Calu3 (cell line): ENCODE measurements at regions of chr7 and their contacts with region 1.

Region 1: DNA sequence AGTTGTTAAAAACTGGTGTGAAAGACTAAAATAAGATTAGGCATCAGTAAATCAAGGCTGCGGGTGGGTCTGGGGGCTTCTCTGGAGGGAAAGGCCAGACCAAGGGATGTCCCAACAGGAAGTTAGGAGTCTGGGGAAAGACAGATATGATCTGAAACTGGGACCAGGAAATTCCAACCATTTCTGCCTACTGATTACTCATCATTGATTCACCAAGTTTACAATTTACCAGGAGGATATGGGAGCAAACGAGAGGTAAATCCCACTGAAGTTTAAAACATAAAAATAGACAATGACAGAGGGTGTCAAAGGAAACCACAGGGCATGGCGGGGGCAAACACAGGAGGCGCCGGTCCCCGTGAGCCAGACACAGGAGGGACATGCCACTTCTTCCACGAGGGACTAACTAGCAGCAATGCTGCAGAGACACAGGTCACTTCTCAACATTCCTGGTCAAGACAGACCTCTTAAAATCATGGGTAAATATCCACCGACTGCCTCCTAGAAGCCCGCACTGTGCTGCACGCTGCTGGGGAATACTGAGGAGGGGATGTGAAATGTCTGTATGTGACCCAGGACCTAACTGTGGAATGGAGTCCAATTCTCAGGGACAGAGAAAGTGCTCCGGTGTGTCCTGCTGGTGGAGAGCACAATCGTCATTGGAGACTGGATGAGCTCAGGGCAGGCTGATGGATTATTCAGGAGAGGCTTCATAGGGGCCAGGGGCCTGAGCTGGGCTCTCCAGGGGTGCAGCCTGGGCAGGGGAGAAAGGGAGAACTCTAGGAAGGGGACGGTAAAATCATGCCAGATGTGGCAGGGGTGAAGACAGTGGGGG is 153.4 kb upstream of the KLF14 start:
- DNase-seq: no peak
- H3K4me3 Mint-ChIP-seq: peak overlapping the region; percentile 60
- H3K27ac Mint-ChIP-seq: peak overlapping the region; percentile 78
- H3K4me1 Mint-ChIP-seq: peaks cover 73% of the 10 kb centered on the region
- H3K27me3 Mint-ChIP-seq: no peaks in the 10 kb centered on the region
- CTCF ChIP-seq: no peak

Region 2: DNA sequence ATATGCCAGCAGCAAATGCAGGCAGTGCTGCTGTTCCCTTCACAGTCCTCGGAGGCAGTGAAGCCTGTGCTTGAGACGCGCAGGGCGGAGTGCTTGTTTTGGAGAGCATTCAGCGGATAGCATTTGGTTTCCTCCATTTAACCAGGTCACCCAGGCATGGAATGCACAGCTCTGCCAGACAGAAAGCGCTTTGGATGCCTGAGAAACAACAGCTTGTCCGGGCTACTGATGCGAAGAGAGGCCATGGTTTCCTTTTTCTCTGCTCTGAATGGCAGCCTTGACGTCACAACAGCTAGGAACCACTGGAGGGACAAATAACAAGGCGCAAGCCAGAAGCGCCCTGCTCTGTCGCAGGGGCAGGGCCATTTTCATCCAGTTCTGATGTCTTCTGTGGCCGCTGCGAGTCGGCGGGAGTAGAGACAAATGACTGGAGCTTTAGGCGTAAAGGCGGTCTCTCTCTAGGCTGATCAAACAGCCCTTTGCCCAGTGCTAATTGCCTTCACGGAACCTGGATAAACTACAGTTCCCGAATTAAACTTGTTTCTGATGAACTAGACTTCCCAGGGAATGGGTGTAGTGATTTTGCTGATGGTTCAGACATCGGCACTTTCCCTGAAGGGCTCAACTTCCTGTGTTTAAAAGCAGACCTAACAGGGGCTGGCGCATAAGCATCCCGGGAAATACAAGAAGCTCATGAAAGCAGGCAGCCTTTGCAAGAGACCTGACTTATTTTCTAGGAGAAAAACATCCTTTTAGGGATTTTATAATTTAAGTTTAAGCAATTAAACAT is 34.2 kb after region 1 on chr7:
- CTCF ChIA-PET with region 1: interaction called, 4 read pairs
- intact Hi-C with region 1: loop called (anchors 5 kb)
- DNase-seq: no peak
- H3K4me3 Mint-ChIP-seq: peak overlapping the region; percentile 56
- H3K27ac Mint-ChIP-seq: peak overlapping the region; percentile 85
- H3K4me1 Mint-ChIP-seq: peaks cover 79% of the 10 kb centered on the region
- H3K27me3 Mint-ChIP-seq: no peaks in the 10 kb centered on the region
- CTCF ChIP-seq: no peak

Region 3: DNA sequence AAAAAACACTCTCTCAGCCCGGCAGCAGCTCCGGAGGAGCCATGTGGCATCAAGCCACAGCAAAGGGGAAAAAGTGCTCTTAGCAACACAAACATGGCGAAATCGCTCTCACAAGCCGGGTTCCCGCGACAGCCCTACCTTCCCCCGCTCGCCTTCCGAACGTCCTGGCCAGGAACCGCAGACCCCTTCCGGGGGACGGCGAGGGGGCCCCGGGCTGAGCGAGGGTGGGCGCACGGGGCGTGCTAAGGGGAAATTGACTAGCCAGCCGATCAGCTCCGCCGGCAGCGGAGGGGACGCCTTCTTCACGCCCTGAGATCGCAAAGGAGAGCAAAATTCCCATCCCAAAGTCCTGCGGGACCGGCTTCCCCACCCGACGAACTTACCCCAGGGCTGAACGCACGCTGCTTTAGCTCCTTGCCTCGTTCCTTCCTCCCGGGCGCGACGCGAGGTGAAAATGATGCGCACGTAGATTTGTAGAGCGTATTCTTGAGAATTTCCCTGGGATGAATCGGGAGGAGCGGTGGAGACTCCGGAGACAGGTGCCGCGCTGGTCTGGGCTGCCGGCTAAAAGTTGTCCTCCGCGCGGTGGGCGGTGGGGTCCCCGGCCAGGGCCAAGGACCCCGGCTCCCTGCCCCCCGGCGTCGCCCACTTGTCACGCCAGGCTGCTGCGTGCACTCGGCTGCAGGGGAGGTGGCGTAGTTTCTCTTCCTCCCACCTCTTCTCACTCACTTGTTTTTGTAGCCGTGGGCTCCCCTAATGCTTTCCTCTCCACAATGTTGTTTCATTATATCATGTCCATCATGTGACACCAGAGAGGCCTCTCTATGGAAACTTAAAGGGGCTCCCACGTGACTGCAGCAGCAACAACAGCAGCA is 220.2 kb after region 1 on chr7:
- CTCF ChIA-PET with region 1: no interaction called
- intact Hi-C with region 1: no loop called
- DNase-seq: peak; percentile 52
- H3K4me3 Mint-ChIP-seq: peak overlapping the region; percentile 100
- H3K27ac Mint-ChIP-seq: peak overlapping the region; percentile 91
- H3K4me1 Mint-ChIP-seq: peaks cover 47% of the 10 kb centered on the region
- H3K27me3 Mint-ChIP-seq: no peaks in the 10 kb centered on the region
- CTCF ChIP-seq: no peak